ENCODE measurements at regions of chr6 and their contacts with region 1.

Region 1: DNA sequence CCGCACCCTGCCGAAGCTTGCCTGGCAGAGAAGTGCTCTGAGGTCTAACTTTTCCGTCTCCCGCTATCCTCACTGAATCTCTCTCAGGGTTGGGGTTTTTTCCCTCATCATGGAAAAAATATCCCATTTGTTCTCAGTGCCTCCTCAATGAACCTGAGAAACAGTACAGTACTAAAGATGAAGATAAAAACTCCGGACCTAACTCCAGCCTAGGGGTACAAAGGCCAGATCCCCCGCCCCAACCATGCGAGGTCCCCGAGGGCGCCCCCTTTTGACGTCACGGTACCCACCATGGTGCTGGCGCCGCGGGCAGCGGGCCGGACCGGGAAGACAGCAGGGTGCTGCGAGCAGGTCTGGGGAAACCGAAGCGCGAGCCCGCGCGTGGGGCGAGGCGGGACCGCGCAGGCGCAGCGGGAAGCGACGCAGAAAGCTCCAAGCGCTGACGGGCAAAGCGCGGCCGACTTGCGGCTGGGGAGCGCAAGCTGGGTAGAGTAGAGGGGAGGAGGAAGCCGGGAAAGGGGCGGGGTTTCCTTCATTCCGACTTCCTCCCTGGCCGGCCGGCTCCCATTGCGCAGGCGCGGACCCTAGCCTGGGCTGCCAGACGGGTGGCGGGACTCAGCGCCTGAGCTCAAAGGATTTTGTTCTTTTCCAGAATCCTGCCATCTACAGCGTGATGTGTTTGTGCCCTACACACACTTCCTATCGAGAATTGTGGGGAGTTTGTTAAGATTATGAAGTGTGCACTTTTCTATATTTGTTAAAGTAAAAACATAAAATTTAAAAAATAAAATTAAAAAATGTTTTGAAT is at the start of gene LSM2:
- DNase-seq: peak; percentile 90 to 99
- H3K4me3 ChIP-seq: peak within 1 kb of the TSS; percentile 79 to 82
- H3K27ac ChIP-seq: peak within 1 kb of the TSS; percentile 95 to 96
- H3K4me1 ChIP-seq: peaks cover 0 to 15% of the 10 kb centered on the region in 2 donors
- H3K27me3 ChIP-seq: no peaks in the 10 kb centered on the region
- CTCF ChIP-seq: peak in 2 of 3 experiments; percentile 24 to 30
- total RNA-seq, gene LSM2: 61.3 TPM

Region 2: DNA sequence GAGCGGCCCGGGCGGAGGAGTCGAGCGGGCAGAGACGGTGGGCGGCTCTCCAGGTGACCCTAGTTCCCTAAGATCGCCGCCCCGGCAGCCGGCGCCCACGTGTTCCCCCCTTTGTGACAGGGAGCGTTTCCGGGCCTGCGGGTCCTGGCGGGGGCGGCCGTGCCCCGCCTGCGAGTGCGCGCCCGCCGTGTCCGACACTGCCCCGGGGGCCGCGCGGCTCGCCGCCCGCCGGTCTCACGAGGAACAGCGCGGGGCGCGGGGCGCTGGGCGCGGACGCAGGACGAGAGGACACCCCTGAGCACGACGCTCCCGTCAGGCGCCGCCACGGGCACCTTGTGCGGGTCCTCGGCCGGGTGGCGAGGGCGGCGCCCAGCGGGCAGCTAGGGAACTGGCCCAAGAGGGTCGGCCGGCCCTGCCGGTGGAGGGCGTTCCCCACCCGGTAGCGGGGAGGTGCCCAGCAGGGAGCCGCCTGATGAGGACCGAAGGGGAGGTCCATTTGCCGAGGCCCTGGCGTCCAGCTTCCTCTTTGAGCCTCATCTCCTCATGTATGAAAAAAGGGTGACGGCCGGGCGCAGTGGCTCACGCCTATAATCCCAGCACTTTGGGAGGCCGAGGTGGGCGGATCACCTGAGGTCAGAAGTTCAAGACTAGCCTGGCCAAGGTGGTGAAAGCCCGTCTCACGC is 10.9 kb before region 1 on chr6 and contains the start of gene VARS1:
- intact Hi-C with region 1: loop called (anchors 1 kb)
- DNase-seq: peak; percentile 72 to 94
- H3K4me3 ChIP-seq: peak within 1 kb of the TSS; percentile 81 to 83
- H3K27ac ChIP-seq: peak within 1 kb of the TSS; percentile 88 to 92
- H3K4me1 ChIP-seq: peaks cover 4 to 18% of the 10 kb centered on the region in 2 donors
- H3K27me3 ChIP-seq: no peaks in the 10 kb centered on the region
- CTCF ChIP-seq: peak; percentile 71 to 97 (median 89)
- total RNA-seq, gene VARS1: 48.3 TPM

Region 3: DNA sequence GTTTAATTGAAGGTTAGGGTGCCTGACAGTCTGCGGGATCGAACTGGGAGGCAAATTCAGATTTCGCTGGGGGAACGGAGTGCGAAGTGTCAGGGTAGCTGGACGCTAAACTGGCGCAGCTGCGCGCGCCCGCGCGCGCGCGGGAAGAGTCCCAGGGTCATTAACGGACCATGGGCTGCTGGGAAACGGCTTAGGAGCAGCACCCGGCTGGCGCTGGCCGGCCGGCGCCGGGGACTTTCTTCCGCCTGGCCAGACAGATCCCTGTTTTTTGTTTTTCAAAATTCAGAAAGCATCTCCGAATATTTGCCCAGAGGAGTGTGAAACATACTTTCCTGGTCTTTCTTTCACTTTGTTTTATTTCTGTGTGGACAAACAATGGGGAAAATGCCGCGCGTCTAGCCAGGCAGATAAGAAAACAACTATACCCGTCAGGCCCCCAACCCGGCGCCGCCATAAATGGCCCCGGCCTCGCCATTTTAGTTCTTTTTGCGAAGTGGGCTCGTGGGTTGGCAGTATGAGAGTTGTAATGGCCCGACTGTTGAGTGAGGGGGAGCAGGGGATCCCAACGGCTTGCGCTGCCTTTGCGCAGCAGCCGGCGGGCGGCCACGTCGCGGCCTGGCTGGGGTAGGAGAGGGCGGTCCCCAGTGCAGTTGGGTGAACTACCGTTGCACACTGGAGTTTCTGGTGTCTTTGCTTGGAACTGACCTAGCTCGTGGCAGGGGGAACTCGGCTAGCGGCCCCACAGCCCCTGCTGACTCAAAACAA is 27.9 kb after region 1 on chr6:
- intact Hi-C with region 1: loop called (anchors 1 kb)
- DNase-seq: peak in 1 of 2 donors; percentile 91
- H3K4me3 ChIP-seq: peak overlapping the region; percentile 67 to 80
- H3K27ac ChIP-seq: peak overlapping the region; percentile 84 to 90
- H3K4me1 ChIP-seq: peaks cover 21 to 43% of the 10 kb centered on the region in 2 donors
- H3K27me3 ChIP-seq: no peaks in the 10 kb centered on the region
- CTCF ChIP-seq: no peak